HepG2 (cell line): ENCODE measurements at regions of chr5 and their contacts with region 1.

Region 1: DNA sequence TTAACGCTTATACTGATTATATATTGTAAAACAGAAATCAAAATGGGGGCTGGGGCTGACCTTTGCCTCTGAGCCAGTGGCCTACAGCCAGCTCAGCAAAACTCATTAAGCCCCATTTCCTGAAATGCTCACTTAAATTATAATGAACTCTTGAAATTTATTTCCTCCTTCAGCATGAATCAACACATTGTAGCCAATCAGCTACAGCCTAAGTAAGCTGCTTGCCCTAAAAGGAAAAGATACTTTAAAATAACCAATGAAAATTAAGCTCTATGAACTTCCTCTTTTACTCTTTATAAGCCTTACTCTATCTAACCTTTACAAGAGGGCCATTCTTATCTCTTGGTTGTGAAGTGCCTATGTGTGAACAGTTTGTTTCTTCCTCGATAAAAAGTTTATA is 33.5 kb upstream of the SUB1 start:
- DNase-seq: no peak
- ATAC-seq: no peak
- H3K4me3 ChIP-seq: no peak overlapping the region
- H3K27ac ChIP-seq: no peak overlapping the region
- H3K4me1 ChIP-seq: peaks cover 35% of the 10 kb centered on the region
- H3K27me3 ChIP-seq: no peaks in the 10 kb centered on the region
- CTCF ChIP-seq: no peak
- EP300 ChIP-seq: no peak
- POLR2A ChIP-seq: no peak
- RAD21 ChIP-seq: no peak

Region 2: DNA sequence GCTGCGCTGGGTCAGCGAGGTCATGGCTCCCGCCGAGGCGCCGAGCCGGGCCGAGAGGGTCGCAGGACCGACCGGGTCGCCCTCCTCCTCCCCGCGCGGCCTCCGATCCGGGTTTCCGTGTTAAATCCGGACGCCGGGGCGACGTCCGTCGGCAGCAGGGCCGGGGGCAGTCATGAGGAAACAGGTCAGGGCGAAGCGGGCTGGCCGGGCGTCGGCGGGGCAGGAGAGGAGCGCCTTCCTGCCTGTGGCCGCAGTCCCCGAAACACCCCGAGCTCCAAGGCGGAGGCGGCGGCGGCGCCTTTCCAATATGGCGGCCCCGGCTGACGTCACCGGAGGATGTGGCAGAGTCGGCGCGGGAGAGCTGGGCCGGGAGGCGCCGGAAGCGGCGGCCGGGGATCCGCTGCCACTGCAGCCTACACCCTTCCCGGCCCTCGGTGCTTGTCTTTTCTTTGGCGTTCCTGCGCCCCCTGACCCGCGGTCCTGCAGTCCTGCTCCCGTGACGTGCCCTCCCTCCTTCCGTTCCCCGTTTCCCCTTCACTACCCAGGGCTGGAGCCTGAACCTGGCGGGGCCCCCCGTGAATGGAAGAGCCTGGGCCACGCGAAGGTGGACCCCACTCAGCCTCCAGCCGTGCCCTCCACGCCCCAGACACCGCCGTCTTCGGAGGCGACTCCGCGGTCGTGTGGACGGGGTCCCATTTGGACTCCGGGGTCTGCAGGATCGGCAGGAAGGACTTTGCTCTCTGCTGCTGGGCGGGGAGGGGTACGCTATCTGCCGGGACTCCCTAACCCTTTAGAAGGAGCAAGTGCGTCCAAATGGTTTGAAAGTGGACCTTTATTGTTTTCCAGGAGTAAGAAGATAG is 377.6 kb before region 1 on chr5 and contains the start of gene GOLPH3:
- CTCF ChIA-PET with region 1: no interaction called
- POLR2A ChIA-PET with region 1: no interaction called
- in situ Hi-C with region 1: no loop called
- intact Hi-C with region 1: no loop called
- DNase-seq: peak; percentile 81
- ATAC-seq: peak; percentile 94
- H3K4me3 ChIP-seq: peak within 1 kb of the TSS; percentile 85 to 90 (median 87)
- H3K27ac ChIP-seq: peak within 1 kb of the TSS; percentile 99
- H3K4me1 ChIP-seq: peaks cover 39% of the 10 kb centered on the region
- H3K27me3 ChIP-seq: no peaks in the 10 kb centered on the region; a peak in 1 of 5 replicates
- CTCF ChIP-seq: no peak; the same call in none of the 2 replicates
- EP300 ChIP-seq: no peak; a peak in 1 of 4 replicates
- POLR2A ChIP-seq: peak; percentile 86 to 90
- RAD21 ChIP-seq: peak; percentile 36; the same call in 1 of the 2 replicates
- total RNA-seq, gene GOLPH3: 84.5 and 102 TPM in 2 replicates

Region 3: GRCh38 chr5:32531885-32532520 is 19.9 kb before region 1 on chr5:
- CTCF ChIA-PET with region 1: no interaction called
- POLR2A ChIA-PET with region 1: interaction called, 18 read pairs
- in situ Hi-C with region 1: no loop called
- intact Hi-C with region 1: no loop called
- DNase-seq: peak; percentile 82
- ATAC-seq: peak; percentile 90
- H3K4me3 ChIP-seq: peak overlapping the region; percentile 31 to 58 (median 42); a peak in 5 of 6 replicates
- H3K27ac ChIP-seq: peak overlapping the region; percentile 82
- H3K4me1 ChIP-seq: peaks cover 83% of the 10 kb centered on the region
- H3K27me3 ChIP-seq: no peaks in the 10 kb centered on the region
- CTCF ChIP-seq: no peak
- EP300 ChIP-seq: no peak; a peak in 1 of 4 replicates
- POLR2A ChIP-seq: no peak; a peak in 1 of 4 replicates
- RAD21 ChIP-seq: no peak

Region 4: DNA sequence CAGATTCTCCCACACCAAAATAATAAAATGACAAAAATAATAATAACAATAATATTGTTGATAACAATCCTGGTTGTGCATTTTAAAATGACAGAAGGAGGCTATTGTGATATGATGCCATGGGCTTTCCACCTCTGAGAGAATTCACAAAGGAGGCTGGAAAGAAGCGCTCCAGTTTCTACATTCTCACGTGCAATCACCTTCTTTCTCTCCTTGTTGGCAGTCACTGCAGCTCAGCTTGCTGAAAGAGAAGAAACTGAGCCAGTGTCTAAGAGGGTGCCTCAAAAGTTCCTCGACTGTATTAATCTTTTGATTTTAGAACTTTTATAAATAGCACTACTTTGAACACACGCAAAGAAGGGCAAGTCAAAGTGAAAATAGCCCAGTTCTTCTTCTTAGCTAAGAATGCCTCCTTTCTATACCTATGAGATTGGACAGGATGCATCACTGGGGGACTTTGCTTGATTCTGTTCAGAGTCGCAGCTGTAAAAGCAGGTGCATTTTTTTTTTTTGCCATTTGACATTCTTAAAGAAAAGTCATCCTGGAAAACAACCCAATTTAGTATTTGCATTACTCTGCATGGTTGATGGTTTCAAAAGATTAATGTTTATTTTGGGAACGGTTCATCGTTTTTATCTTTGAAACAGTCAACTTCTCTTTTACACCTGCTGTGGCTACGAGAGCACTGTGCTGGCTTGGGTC is 21.1 kb after region 1 on chr5:
- CTCF ChIA-PET with region 1: no interaction called
- POLR2A ChIA-PET with region 1: interaction called, 16 read pairs
- in situ Hi-C with region 1: no loop called
- intact Hi-C with region 1: loop called (anchors 1 kb)
- DNase-seq: no peak
- ATAC-seq: no peak
- H3K4me3 ChIP-seq: no peak overlapping the region
- H3K27ac ChIP-seq: peak overlapping the region; percentile 99
- H3K4me1 ChIP-seq: peaks cover 52% of the 10 kb centered on the region
- H3K27me3 ChIP-seq: no peaks in the 10 kb centered on the region
- CTCF ChIP-seq: no peak
- EP300 ChIP-seq: no peak
- POLR2A ChIP-seq: no peak
- RAD21 ChIP-seq: no peak

Region 5: DNA sequence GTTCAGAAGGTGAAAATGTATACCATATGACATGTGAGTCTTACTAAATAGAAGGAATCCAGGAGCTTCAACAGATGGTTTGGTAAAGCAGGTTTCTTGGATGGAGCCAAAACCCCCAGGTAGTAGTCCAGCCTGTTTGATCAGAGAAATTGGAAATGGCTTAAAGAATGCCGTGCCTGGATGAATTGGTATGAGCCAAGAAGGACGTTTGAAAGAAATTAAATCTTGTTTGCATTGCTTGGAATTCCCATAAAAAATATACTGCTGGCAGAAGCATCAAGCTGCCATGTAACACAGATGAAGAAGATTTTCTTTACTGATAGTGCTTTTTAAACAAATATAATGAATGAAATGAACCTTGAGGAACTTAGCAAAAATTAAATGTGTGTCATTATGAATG is 335.5 kb after region 1 on chr5:
- CTCF ChIA-PET with region 1: no interaction called
- POLR2A ChIA-PET with region 1: no interaction called
- in situ Hi-C with region 1: no loop called
- intact Hi-C with region 1: no loop called
- DNase-seq: no peak
- ATAC-seq: no peak
- H3K4me3 ChIP-seq: no peak overlapping the region
- H3K27ac ChIP-seq: no peak overlapping the region
- H3K4me1 ChIP-seq: no peaks in the 10 kb centered on the region
- H3K27me3 ChIP-seq: no peaks in the 10 kb centered on the region
- CTCF ChIP-seq: no peak
- EP300 ChIP-seq: no peak
- POLR2A ChIP-seq: no peak
- RAD21 ChIP-seq: no peak